Activated T-helper 2 cell treated with anti-CD3 and anti-CD28 coated beads, Interferon-gamma antibody, Interleukin-2, Interleukin-4, amounts not matched to agents 10 μg/mL and 5 μg/mL and 100 μg/mL, durations not matched to agents 14 hours and 24 hours and 36 hours (primary cell): ENCODE measurements at regions of chr5 and their contacts with region 1.

Region 1: GRCh38 chr5:134304311-134304710 is 62.7 kb downstream of the CDKL3 start:
- DNase-seq: no peak
- H3K4me3 Mint-ChIP-seq: no peak overlapping the region
- H3K27ac Mint-ChIP-seq: no peak overlapping the region
- H3K4me1 Mint-ChIP-seq: peaks cover 3% of the 10 kb centered on the region
- H3K27me3 Mint-ChIP-seq: peaks cover 3% of the 10 kb centered on the region

Region 2: GRCh38 chr5:134380346-134380745 is 76.0 kb after region 1 on chr5:
- intact Hi-C with region 1: loop called (anchors 10 kb)
- DNase-seq: no peak
- H3K4me3 Mint-ChIP-seq: peak overlapping the region; percentile 35
- H3K27ac Mint-ChIP-seq: peak overlapping the region; percentile 51
- H3K4me1 Mint-ChIP-seq: peaks cover 29% of the 10 kb centered on the region
- H3K27me3 Mint-ChIP-seq: no peaks in the 10 kb centered on the region